IMR-90 (cell line): ENCODE measurements at regions of chr2 and their contacts with region 1.

Region 1: GRCh38 chr2:224525774-224526173 is 59.4 kb downstream of the CUL3 start:
- DNase-seq: no peak
- ATAC-seq: no peak
- H3K4me3 ChIP-seq: no peak overlapping the region
- H3K27ac ChIP-seq: no peak overlapping the region
- H3K4me1 ChIP-seq: peaks cover 14% of the 10 kb centered on the region; the same call in 1 of the 2 replicates
- H3K27me3 ChIP-seq: no peaks in the 10 kb centered on the region
- CTCF ChIP-seq: no peak
- POLR2A ChIP-seq: no peak
- RAD21 ChIP-seq: no peak

Region 2: GRCh38 chr2:224086226-224086914 is 439.4 kb before region 1 on chr2:
- CTCF ChIA-PET with region 1: no interaction called
- POLR2A ChIA-PET with region 1: no interaction called
- dilution Hi-C with region 1: no loop called
- in situ Hi-C with region 1: no loop called
- intact Hi-C with region 1: no loop called
- DNase-seq: peak; percentile 89
- ATAC-seq: peak; percentile 88
- H3K4me3 ChIP-seq: no peak overlapping the region
- H3K27ac ChIP-seq: no peak overlapping the region
- H3K4me1 ChIP-seq: peaks cover 7% of the 10 kb centered on the region; the same call in 1 of the 2 replicates
- H3K27me3 ChIP-seq: no peaks in the 10 kb centered on the region
- CTCF ChIP-seq: no peak
- POLR2A ChIP-seq: no peak
- RAD21 ChIP-seq: no peak

Region 3: GRCh38 chr2:225064928-225065327 is 539.2 kb after region 1 on chr2:
- CTCF ChIA-PET with region 1: interaction called, 4 read pairs
- POLR2A ChIA-PET with region 1: interaction called, 10 read pairs
- dilution Hi-C with region 1: no loop called
- in situ Hi-C with region 1: no loop called
- intact Hi-C with region 1: no loop called
- DNase-seq: no peak
- ATAC-seq: no peak
- H3K4me3 ChIP-seq: no peak overlapping the region
- H3K27ac ChIP-seq: no peak overlapping the region
- H3K4me1 ChIP-seq: no peaks in the 10 kb centered on the region
- H3K27me3 ChIP-seq: no peaks in the 10 kb centered on the region
- CTCF ChIP-seq: no peak
- POLR2A ChIP-seq: no peak
- RAD21 ChIP-seq: no peak